ENCODE measurements at regions of chr7 and their contacts with region 1.

Region 1: DNA sequence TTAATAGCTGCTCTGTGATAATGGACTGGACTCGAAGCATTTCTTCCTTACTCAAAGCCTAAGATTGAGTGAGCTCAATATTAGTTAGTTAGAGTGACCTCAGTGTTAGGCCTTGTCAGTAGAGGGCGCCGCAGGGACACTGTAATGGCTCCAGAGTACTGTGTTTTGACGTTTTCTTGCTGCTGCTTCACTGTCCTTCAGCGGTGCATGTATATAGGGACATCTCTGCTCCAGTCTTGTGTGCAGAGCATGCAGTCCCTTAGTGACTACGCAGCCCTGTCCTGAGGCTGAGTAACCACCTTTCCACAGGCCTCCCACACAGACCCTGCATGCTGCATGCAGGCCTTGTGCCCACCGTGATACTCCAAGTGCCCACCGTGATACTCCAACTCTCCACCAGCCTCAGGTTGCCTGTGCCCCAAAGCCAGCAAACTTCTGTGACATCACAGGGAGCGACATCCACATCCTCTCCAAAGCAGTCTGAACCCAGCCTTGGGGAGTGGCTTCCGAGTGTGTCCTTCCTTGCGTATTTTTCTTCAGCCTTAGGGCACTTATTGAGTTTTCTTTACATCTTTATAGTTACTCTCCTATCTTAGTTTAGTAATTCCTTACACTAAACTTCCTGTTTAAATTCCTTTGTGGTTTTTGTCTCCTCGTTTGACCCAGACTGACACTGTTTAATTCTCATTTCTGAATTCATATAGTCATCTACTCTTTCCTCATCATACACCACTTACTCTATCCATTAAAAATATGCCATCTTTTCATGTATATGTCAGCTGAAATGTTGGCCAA is 118.2 kb downstream of the JAZF1 start:
- DNase-seq: peak in 1 of 2 experiments; percentile 86
- H3K4me3 ChIP-seq: no peak overlapping the region
- H3K27ac ChIP-seq: no peak overlapping the region
- H3K4me1 ChIP-seq: peaks cover 2 to 7% (median 3%) of the 10 kb centered on the region in 4 experiments; a peak in 6 of 7 replicates
- H3K27me3 ChIP-seq: no peaks in the 10 kb centered on the region
- CTCF ChIP-seq: peak; percentile 62 to 92 (median 75)
- EP300 ChIP-seq: no peak
- POLR2A ChIP-seq: no peak
- RAD21 ChIP-seq: peak; percentile 70 to 80

Region 2: GRCh38 chr7:28020302-28020940 is 42.0 kb before region 1 on chr7:
- CTCF ChIA-PET with region 1: interaction called, 18 read pairs
- POLR2A ChIA-PET with region 1: no interaction called
- DNase-seq: peak; percentile 43 to 68
- H3K4me3 ChIP-seq: no peak overlapping the region
- H3K27ac ChIP-seq: no peak overlapping the region
- H3K4me1 ChIP-seq: peaks cover 0 to 3% (median 2%) of the 10 kb centered on the region in 4 experiments; a peak in 4 of 7 replicates
- H3K27me3 ChIP-seq: no peaks in the 10 kb centered on the region
- CTCF ChIP-seq: peak; percentile 55 to 98 (median 93)
- EP300 ChIP-seq: no peak
- POLR2A ChIP-seq: no peak
- RAD21 ChIP-seq: peak; percentile 98 to 99

Region 3: GRCh38 chr7:28037220-28038010 is 25.0 kb before region 1 on chr7:
- CTCF ChIA-PET with region 1: interaction called, 15 read pairs
- POLR2A ChIA-PET with region 1: no interaction called
- DNase-seq: no peak
- H3K4me3 ChIP-seq: no peak overlapping the region
- H3K27ac ChIP-seq: no peak overlapping the region
- H3K4me1 ChIP-seq: peaks cover 0 to 3% (median under 1%) of the 10 kb centered on the region in 4 experiments; a peak in 2 of 7 replicates
- H3K27me3 ChIP-seq: no peaks in the 10 kb centered on the region
- CTCF ChIP-seq: no peak
- EP300 ChIP-seq: no peak
- POLR2A ChIP-seq: no peak
- RAD21 ChIP-seq: no peak

Region 4: GRCh38 chr7:28044825-28045224 is 17.6 kb before region 1 on chr7:
- CTCF ChIA-PET with region 1: interaction called, 38 read pairs
- POLR2A ChIA-PET with region 1: no interaction called
- DNase-seq: no peak
- H3K4me3 ChIP-seq: no peak overlapping the region
- H3K27ac ChIP-seq: no peak overlapping the region
- H3K4me1 ChIP-seq: peaks cover 0 to 5% (median 0%) of the 10 kb centered on the region in 4 experiments; a peak in 2 of 7 replicates
- H3K27me3 ChIP-seq: no peaks in the 10 kb centered on the region
- CTCF ChIP-seq: peak in 2 of 3 experiments; percentile 20 to 32; a peak in 2 of 4 replicates
- EP300 ChIP-seq: no peak
- POLR2A ChIP-seq: no peak
- RAD21 ChIP-seq: peak; percentile 39 to 51; a peak in 3 of 4 replicates

Region 5: GRCh38 chr7:28078036-28078901 is 15.9 kb after region 1 on chr7:
- CTCF ChIA-PET with region 1: interaction called, 133 read pairs
- POLR2A ChIA-PET with region 1: no interaction called
- DNase-seq: no peak
- H3K4me3 ChIP-seq: no peak overlapping the region
- H3K27ac ChIP-seq: no peak overlapping the region
- H3K4me1 ChIP-seq: peaks cover 0 to 4% (median 0%) of the 10 kb centered on the region in 4 experiments; a peak in 2 of 7 replicates
- H3K27me3 ChIP-seq: no peaks in the 10 kb centered on the region
- CTCF ChIP-seq: peak; percentile 6 to 97 (median 77)
- EP300 ChIP-seq: no peak
- POLR2A ChIP-seq: no peak
- RAD21 ChIP-seq: peak; percentile 65 to 68

Region 6: GRCh38 chr7:28083164-28083997 is 21.0 kb after region 1 on chr7:
- CTCF ChIA-PET with region 1: interaction called, 133 read pairs
- POLR2A ChIA-PET with region 1: no interaction called
- DNase-seq: no peak
- H3K4me3 ChIP-seq: no peak overlapping the region
- H3K27ac ChIP-seq: no peak overlapping the region
- H3K4me1 ChIP-seq: peaks cover 0 to 6% (median 0%) of the 10 kb centered on the region in 4 experiments; a peak in 2 of 7 replicates
- H3K27me3 ChIP-seq: no peaks in the 10 kb centered on the region
- CTCF ChIP-seq: no peak
- EP300 ChIP-seq: no peak
- POLR2A ChIP-seq: no peak
- RAD21 ChIP-seq: no peak